ENCODE measurements at regions of chr2 and their contacts with region 1.

Region 1: DNA sequence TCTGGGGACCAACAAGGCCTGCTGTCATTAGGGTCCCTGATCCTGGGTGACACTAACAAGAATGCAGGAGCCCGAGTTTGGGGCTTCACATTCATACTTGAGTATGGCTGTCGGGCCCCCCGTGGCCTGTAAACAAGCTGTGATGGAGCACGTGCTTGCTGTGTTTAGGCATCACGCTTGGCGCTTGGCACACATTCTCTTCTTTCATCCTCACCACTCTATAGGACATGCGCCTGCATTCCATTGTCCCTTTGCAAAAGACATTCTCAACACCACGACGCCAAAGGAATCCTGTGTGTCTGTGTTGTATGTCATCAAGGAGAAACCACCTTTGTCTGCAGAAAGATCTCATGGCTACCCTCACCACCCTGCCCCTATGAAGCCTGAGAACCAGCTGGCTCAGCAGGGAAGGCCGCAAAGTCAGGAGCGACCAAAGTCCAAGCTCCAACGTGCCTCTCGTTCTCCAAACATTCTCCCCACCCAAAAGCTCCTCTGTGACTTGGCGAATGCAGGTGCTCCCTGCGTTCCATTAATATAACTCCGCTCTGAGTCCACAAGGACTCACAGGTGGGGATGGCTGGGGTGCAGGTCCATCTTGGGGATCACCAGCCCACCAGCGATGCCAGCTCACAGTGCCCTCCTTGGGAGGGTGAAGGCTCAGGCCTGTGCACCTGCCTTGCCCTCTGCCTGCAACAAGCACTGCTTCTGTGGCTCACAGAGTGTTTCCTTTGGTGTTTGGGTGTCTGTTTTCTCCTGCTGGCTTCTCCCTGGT is 6.1 kb upstream of the PER2 start:
- DNase-seq: no peak
- ATAC-seq: no peak

Region 2: GRCh38 chr2:238220892-238221521 is 73.6 kb before region 1 on chr2:
- intact Hi-C with region 1: no loop called
- DNase-seq: no peak
- ATAC-seq: peak; percentile 53 to 54

Region 3: GRCh38 chr2:238239872-238240751 is 54.4 kb before region 1 on chr2 and contains the start of gene HES6:
- intact Hi-C with region 1: no loop called
- DNase-seq: peak; percentile 93
- ATAC-seq: peak; percentile 88 to 89
- total RNA-seq, gene HES6: 3.8 to 4.3 TPM

Region 4: DNA sequence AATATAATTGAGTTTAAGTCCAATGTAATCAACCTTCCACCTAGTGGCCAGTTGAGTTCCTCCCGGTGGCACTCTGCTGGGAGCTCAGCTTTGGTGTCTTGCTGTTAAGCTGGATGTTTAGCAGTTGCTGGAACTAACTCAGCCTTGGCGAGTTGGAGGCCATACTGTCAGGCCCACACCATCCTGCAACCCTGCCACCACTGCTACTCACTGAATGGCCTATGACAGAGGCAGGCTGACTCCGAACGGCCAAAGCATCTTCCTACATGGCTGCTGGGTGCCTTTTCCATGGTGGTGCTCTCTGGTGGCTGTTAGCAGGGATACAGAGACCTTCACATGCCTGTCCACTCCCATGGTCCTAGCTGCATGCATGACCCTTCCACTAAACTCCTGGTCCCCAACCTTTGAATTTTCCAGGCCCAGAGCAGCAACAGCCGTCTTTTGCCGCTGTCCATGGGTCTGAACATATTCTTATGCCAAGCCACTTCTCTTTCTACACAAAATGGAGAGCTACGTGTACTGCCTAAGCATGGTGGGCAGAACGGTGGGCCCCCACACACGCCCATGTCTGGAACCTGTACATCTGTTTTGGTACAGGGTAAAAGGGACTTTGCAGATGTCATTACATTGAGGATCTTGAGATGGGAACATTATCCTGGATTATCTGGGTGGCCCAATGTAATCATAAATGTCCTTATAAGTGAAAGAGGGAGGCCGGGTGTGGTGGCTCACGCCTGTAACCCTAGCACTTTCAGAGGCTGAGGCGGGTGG is 10.7 kb after region 1 on chr2:
- intact Hi-C with region 1: loop called in 1 of 2 experiments (anchors 1 kb)
- DNase-seq: no peak
- ATAC-seq: no peak

Region 5: GRCh38 chr2:238426568-238427434 is 132.2 kb after region 1 on chr2 and contains the start of gene ASB1:
- intact Hi-C with region 1: no loop called
- DNase-seq: peak; percentile 84
- ATAC-seq: peak; percentile 90 to 91
- total RNA-seq, gene ASB1: 43.2 to 51.7 TPM